ENCODE measurements at regions of chr15 and their contacts with region 1.

Region 1: DNA sequence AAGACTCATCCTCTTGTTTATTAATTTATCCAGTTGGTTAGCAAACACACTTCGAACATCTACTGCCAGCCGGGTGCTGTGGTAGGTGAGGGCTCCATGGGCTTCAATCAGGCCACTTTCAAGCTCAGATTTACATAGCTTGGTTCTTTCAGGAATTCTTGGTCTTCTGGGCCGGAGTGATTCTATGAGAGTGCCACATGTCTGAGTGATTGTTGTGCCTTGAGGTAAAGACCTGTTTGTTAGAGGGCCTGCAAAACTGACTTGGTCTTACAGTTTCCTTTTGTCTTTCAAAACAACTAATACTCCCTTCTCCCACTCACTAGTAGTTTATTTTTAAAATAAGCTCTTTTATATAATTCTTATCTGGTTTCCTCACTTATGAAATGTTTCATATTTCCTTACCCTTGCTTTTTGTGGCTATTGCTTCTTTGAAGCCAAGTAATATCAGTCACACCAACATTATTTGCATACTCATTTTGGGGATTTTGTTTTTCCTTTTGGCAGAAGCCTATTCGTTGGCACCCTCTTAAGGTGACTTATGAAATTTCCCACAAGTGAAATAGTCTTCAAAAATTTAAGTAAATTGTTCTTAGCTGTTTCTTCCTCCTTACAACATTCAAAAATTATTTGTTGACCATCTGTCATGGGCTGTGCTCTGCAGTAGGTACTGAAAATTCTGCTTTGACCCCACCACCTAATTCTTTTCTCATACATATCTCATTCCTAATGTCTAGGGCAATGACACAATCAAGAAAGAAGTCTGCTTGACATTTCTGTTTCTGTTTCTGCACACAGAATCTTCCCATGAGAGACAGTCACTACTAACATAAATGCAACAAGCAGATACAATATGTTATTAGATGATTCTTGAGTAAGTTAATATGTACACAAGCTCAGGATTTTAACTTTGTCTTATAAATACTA is 120.2 kb downstream of the LRRC28 start:
- DNase-seq: no peak
- ATAC-seq: peak; percentile 95
- H3K4me3 Mint-ChIP-seq: no peak overlapping the region
- H3K27ac Mint-ChIP-seq: peak overlapping the region; percentile 55
- H3K4me1 Mint-ChIP-seq: peaks cover 21% of the 10 kb centered on the region
- H3K27me3 Mint-ChIP-seq: no peaks in the 10 kb centered on the region

Region 2: GRCh38 chr15:99282121-99282520 is 89.3 kb before region 1 on chr15:
- CTCF ChIA-PET with region 1: interaction called, 3 read pairs
- POLR2A ChIA-PET with region 1: no interaction called
- intact Hi-C with region 1: loop called (anchors 2 to 5 kb)
- DNase-seq: no peak
- ATAC-seq: no peak
- H3K4me3 Mint-ChIP-seq: no peak overlapping the region
- H3K27ac Mint-ChIP-seq: no peak overlapping the region
- H3K4me1 Mint-ChIP-seq: peaks cover 44% of the 10 kb centered on the region
- H3K27me3 Mint-ChIP-seq: no peaks in the 10 kb centered on the region

Region 3: GRCh38 chr15:99343881-99344551 is 27.4 kb before region 1 on chr15:
- CTCF ChIA-PET with region 1: interaction called, 5 read pairs
- POLR2A ChIA-PET with region 1: no interaction called
- intact Hi-C with region 1: loop called in 1 of 2 experiments (anchors 2 kb)
- DNase-seq: peak; percentile 71
- ATAC-seq: peak; percentile 90
- H3K4me3 Mint-ChIP-seq: no peak overlapping the region
- H3K27ac Mint-ChIP-seq: peak overlapping the region; percentile 7
- H3K4me1 Mint-ChIP-seq: peaks cover 12% of the 10 kb centered on the region
- H3K27me3 Mint-ChIP-seq: no peaks in the 10 kb centered on the region